Heart left ventricle (tissue), 16 donors: ENCODE measurements at regions of chr15 and their contacts with region 1.

Region 1: GRCh38 chr15:71501344-71502076 is 308.8 kb upstream of the NR2E3 start:
- DNase-seq: peak in 1 of 5 donors; percentile 24
- ATAC-seq: peak; percentile 89 to 94 (median 94)
- H3K4me3 ChIP-seq: no peak overlapping the region
- H3K27ac ChIP-seq: peak overlapping the region; percentile 40 to 81 (median 64)
- H3K4me1 ChIP-seq: peaks cover 0 to 35% (median 6%) of the 10 kb centered on the region in 12 donors
- H3K27me3 ChIP-seq: no peaks in the 10 kb centered on the region
- CTCF ChIP-seq: no peak
- POLR2A ChIP-seq: no peak

Region 2: DNA sequence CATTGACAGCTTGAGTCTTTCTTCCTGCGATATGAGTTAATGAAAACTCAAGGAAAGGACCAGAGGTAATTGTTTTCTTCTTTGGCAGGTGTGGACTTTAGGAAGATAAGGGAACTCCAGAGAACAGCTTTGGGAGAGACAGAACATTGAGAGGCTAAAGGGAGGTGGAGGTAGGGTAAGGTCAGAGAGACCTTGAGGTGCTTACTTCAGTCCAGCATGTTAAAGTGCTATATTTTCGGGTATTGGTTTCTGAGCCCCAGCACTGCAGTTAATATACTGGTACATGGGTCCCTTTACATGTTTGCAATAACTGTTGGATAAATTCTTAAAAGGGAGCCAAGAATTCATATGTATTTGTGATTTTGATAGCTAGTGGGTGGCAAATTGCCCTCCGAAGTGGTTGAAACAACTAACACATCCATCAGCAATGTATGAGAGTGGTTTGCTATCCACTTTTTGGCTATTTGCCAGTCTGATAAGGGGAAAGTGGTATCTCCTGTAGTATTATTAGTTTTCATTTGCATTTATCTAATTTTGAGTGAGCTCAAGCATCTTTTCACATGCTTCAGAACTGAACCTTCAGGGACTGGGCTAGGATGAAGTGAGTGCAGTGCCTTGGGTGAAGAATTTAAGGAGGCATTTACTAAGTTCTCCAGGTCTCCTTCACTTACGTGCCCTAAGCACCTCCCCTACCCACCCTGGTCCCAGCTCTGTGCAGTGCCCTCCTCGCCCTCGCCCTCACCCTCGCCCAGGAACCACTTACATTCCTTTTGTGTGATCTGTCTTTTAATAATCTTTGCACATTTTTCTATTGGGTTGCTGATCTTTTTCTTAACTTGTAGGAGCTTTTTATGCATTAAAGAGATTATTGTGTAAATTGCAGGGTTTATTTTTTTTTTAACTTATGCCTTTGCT is 63.8 kb before region 1 on chr15:
- intact Hi-C with region 1: no loop called
- DNase-seq: no peak
- ATAC-seq: peak in 1 of 4 donors; percentile 57
- H3K4me3 ChIP-seq: no peak overlapping the region
- H3K27ac ChIP-seq: peak overlapping the region in 4 of 12 donors; percentile 15 to 54 (median 36)
- H3K4me1 ChIP-seq: peaks cover 0 to 14% (median 6%) of the 10 kb centered on the region in 12 donors
- H3K27me3 ChIP-seq: no peaks in the 10 kb centered on the region
- CTCF ChIP-seq: no peak
- POLR2A ChIP-seq: no peak

Region 3: GRCh38 chr15:71547011-71547410 is 45.5 kb after region 1 on chr15:
- intact Hi-C with region 1: loop called in 1 of 10 experiments (anchors 2 kb)
- DNase-seq: peak; percentile 32 to 70 (median 58)
- ATAC-seq: peak; percentile 49 to 77 (median 70)
- H3K4me3 ChIP-seq: peak overlapping the region in 3 of 12 donors; percentile 16 to 26 (median 25)
- H3K27ac ChIP-seq: peak overlapping the region in 8 of 12 donors; percentile 11 to 79 (median 50)
- H3K4me1 ChIP-seq: peaks cover 0 to 41% (median 9%) of the 10 kb centered on the region in 12 donors
- H3K27me3 ChIP-seq: no peaks in the 10 kb centered on the region
- CTCF ChIP-seq: no peak
- POLR2A ChIP-seq: no peak

Region 4: GRCh38 chr15:71581406-71581930 is 80.0 kb after region 1 on chr15:
- intact Hi-C with region 1: no loop called
- DNase-seq: no peak
- ATAC-seq: no peak
- H3K4me3 ChIP-seq: no peak overlapping the region
- H3K27ac ChIP-seq: no peak overlapping the region
- H3K4me1 ChIP-seq: no peaks in the 10 kb centered on the region
- H3K27me3 ChIP-seq: no peaks in the 10 kb centered on the region
- CTCF ChIP-seq: no peak
- POLR2A ChIP-seq: no peak